HCT116 (cell line): ENCODE measurements at regions of chr15 and their contacts with region 1.

Region 1: GRCh38 chr15:88246666-88247446 is 9.7 kb downstream of the NTRK3 start:
- DNase-seq: peak; percentile 53
- ATAC-seq: peak; percentile 89
- H3K4me3 ChIP-seq: no peak overlapping the region; a peak in 1 of 4 replicates
- H3K27ac ChIP-seq: no peak overlapping the region
- H3K4me1 ChIP-seq: peaks cover 0 to 5% of the 10 kb centered on the region in 2 experiments; a peak in 2 of 4 replicates
- H3K27me3 ChIP-seq: no peaks in the 10 kb centered on the region
- CTCF ChIP-seq: peak; percentile 67 to 94 (median 89)
- POLR2A ChIP-seq: no peak
- RAD21 ChIP-seq: peak; percentile 64

Region 2: GRCh38 chr15:88042047-88042446 is 204.8 kb before region 1 on chr15:
- CTCF ChIA-PET with region 1: no interaction called
- POLR2A ChIA-PET with region 1: no interaction called
- RAD21 ChIA-PET with region 1: no interaction called
- intact Hi-C with region 1: no loop called
- DNase-seq: no peak
- ATAC-seq: no peak
- H3K4me3 ChIP-seq: no peak overlapping the region
- H3K27ac ChIP-seq: no peak overlapping the region
- H3K4me1 ChIP-seq: no peaks in the 10 kb centered on the region
- H3K27me3 ChIP-seq: no peaks in the 10 kb centered on the region
- CTCF ChIP-seq: no peak
- POLR2A ChIP-seq: no peak
- RAD21 ChIP-seq: no peak

Region 3: DNA sequence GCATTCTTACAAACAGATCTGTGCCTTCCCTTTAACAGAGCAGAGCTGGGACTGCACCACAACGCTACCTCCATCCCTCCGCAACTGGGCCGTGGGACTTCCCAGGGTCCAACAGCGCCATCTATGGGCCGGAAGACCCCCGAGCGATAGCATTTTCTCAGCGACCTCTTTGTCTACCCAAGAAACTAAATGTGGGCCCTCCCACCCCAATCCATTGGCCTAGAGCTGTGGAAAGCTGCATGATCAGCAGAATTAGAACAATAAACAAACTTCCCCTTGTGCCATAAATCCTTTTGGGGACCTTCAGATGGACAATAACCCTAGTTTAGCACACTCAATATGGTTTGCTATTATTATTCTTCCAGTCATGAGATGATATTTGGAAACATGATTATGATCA is 84.4 kb after region 1 on chr15:
- CTCF ChIA-PET with region 1: no interaction called
- POLR2A ChIA-PET with region 1: no interaction called
- RAD21 ChIA-PET with region 1: no interaction called
- intact Hi-C with region 1: no loop called
- DNase-seq: peak; percentile 72
- ATAC-seq: peak; percentile 98
- H3K4me3 ChIP-seq: no peak overlapping the region
- H3K27ac ChIP-seq: no peak overlapping the region
- H3K4me1 ChIP-seq: no peaks in the 10 kb centered on the region
- H3K27me3 ChIP-seq: peaks cover 6% of the 10 kb centered on the region
- CTCF ChIP-seq: peak; percentile 52 to 93 (median 89); a peak in 5 of 6 replicates
- POLR2A ChIP-seq: no peak
- RAD21 ChIP-seq: peak; percentile 53

Region 4: DNA sequence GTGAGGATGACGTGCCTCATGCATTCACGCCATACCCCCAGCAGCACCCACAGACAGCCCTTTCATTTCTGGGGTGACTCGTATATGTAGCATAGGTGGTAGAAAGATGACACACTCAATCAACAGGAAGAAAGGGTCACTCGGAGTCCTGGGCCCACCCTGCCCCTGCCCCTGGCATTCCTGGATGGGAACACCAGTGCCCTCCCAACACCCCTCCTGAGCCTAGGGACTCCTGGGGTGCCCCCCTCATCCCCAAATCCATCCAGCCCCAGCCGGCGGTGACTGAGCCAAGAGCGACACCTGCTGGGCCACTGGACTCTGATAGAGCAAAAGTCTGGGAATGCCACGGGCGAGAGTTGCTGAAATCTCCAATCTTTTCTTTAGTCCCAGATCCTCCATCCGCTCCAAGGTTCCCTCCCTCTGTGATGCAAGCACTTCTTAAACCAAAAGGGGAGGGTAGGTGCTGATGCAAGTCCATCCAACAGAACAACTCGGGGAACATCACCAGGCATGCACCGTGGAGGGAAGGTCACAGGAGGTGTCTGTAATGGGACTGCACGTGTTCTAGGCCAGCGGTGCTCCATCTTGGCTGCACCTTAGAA is 587.5 kb after region 1 on chr15:
- CTCF ChIA-PET with region 1: no interaction called
- POLR2A ChIA-PET with region 1: no interaction called
- RAD21 ChIA-PET with region 1: no interaction called
- intact Hi-C with region 1: loop called (anchors 10 kb)
- DNase-seq: peak; percentile 22
- ATAC-seq: peak; percentile 89
- H3K4me3 ChIP-seq: no peak overlapping the region
- H3K27ac ChIP-seq: no peak overlapping the region
- H3K4me1 ChIP-seq: peaks cover 0 to 3% of the 10 kb centered on the region in 2 experiments; a peak in 1 of 4 replicates
- H3K27me3 ChIP-seq: no peaks in the 10 kb centered on the region
- CTCF ChIP-seq: peak; percentile 70 to 89 (median 79)
- POLR2A ChIP-seq: no peak
- RAD21 ChIP-seq: peak; percentile 89